ENCODE measurements at regions of chr6 and their contacts with region 1.

Region 1: DNA sequence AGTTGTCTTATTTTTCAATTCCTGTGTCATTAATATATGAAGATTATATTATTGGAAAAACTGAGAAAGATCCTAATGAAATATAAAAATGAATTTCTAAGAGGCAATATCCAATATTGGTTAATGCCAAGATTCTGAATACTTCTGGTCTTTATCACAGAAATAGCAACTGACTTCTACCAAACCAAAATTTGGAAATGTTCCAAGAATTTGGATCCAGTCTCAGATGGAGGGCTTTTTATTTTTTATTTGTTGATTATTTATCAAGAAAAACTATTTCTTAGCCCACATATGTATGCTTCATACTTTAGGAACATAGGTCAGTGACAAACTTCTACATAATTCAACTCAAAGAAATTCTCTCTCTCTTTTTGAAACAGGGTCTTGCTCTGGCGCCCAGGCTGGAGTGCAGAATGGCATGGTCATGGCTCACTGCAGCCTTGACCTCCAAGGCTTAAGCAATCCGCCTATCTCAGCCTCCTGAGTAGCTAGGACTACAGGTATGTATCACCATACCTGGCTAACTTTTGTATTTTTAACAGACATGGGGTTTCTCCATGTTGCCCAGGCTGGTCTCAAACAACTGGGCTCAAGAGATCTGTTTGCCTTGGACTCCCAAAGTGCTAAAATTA is 13.1 kb downstream of the NUP43 start:
- DNase-seq: no peak
- H3K4me3 ChIP-seq: no peak overlapping the region
- H3K27ac ChIP-seq: no peak overlapping the region
- H3K27me3 ChIP-seq: no peaks in the 10 kb centered on the region
- CTCF ChIP-seq: no peak

Region 2: GRCh38 chr6:149746147-149746946 is 13.1 kb after region 1 on chr6 and contains the start of gene NUP43:
- CTCF ChIA-PET with region 1: interaction called, 10 read pairs
- POLR2A ChIA-PET with region 1: no interaction called
- DNase-seq: peak; percentile 84
- H3K4me3 ChIP-seq: peak within 1 kb of the TSS; percentile 92
- H3K27ac ChIP-seq: no peak within 1 kb of the TSS
- H3K27me3 ChIP-seq: no peaks in the 10 kb centered on the region
- CTCF ChIP-seq: peak; percentile 55
- polyA plus RNA-seq, gene NUP43: 25.6 and 27.9 TPM in 2 replicates